ENCODE measurements at regions of chr11 and their contacts with region 1.

Region 1: GRCh38 chr11:87421422-87421821 is 383.7 kb downstream of the TMEM135 start:
- DNase-seq: peak in 2 of 6 donors; percentile 34 to 49
- ATAC-seq: peak; percentile 70 to 91 (median 89)
- H3K4me3 ChIP-seq: no peak overlapping the region
- H3K27ac ChIP-seq: no peak overlapping the region
- H3K4me1 ChIP-seq: no peaks in the 10 kb centered on the region
- H3K27me3 ChIP-seq: no peaks in the 10 kb centered on the region
- CTCF ChIP-seq: peak; percentile 67 to 84 (median 74)

Region 2: DNA sequence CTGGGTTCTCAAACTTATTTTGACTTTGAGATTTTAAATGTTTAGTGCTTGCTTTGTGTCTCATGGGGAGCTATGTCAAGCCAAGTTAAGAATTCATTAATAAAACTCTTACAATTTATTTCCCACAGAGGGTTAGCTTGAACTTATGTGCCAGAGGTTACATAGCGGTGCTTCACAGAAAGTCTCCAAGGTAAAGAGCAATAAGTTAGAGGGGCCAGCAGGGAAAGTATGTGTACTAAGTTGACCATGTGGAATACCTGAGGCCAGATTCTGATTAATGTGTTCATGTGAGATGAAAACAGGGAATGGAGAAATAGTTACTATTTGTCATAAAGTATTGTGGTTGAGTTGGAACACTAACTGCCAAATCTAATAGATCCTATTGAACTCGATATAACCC is 234.3 kb before region 1 on chr11:
- intact Hi-C with region 1: no loop called
- DNase-seq: no peak
- ATAC-seq: no peak
- H3K4me3 ChIP-seq: no peak overlapping the region
- H3K27ac ChIP-seq: no peak overlapping the region
- H3K4me1 ChIP-seq: no peaks in the 10 kb centered on the region
- H3K27me3 ChIP-seq: no peaks in the 10 kb centered on the region
- CTCF ChIP-seq: no peak

Region 3: DNA sequence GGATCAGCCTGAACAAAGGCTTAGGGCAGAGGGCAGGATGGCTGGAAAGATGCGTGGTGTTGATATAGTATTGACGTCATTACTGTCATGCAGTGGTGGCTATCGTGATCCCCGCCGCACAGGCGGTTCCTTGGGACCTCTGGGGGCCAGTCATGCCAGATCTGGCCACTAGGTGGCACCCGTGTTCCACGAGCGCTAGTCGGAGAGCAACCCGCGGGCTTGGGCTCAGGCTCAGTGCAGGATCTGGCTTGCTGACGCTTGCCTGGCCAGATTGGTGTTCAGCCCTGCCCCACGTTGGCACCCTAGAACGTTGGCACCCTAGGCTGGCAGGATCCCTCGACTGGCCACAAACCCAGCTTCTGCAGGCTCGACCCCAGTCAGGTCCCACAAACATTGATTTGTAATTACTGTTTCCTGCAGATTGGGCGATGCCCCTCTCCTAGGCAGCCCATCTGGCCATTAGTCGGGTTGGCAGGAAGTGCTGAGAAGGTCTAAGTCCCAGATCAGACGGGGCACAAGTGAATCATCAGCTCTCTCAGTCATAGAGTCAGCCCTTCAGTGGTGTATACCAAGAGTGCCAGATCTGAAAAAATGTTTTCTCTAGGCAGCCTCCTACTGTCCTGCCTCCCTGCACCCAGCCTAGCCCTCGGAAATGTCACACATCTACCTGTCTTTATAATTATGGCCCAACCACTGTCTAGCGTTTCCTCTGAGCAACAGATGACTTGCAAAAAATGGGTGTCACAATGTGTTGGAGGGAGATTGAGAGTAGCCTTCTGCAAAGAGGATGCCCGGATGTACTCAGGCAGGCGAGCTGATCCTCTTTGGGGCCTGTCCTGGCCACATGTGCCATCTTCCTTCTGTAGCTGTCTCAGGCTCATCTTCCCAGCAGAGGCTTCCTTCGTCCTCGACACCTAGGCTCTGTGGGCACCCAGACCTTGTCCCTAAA is 68.4 kb before region 1 on chr11:
- intact Hi-C with region 1: loop called in 2 of 3 experiments (anchors 5 to 10 kb)
- DNase-seq: peak; percentile 57 to 98 (median 84)
- ATAC-seq: peak; percentile 92 to 100 (median 98)
- H3K4me3 ChIP-seq: no peak overlapping the region
- H3K27ac ChIP-seq: no peak overlapping the region
- H3K4me1 ChIP-seq: no peaks in the 10 kb centered on the region
- H3K27me3 ChIP-seq: no peaks in the 10 kb centered on the region
- CTCF ChIP-seq: peak; percentile 98 to 100 (median 99)

Region 4: DNA sequence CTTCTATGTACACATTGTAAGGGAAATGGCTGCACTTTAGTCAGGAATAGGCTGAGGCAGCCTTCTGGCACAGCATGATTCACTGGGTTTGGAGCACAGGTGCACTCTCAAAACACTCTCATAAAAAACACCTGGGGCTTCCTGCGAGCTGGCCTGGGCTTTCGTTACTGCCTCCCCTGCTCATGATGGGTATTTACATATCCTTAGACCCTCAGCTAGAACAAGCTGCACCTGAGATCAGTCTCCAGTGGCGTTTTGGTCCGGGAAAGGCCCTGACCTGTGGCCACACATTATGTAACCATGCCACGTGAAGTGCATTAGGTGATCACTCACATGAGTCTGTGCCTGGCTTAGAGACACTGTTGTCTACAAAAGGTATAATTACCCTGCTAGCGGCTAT is 62.0 kb before region 1 on chr11:
- intact Hi-C with region 1: loop called in 2 of 3 experiments (anchors 5 to 10 kb)
- DNase-seq: no peak
- ATAC-seq: peak in 1 of 4 donors; percentile 46
- H3K4me3 ChIP-seq: no peak overlapping the region
- H3K27ac ChIP-seq: no peak overlapping the region
- H3K4me1 ChIP-seq: no peaks in the 10 kb centered on the region
- H3K27me3 ChIP-seq: no peaks in the 10 kb centered on the region
- CTCF ChIP-seq: no peak

Region 5: DNA sequence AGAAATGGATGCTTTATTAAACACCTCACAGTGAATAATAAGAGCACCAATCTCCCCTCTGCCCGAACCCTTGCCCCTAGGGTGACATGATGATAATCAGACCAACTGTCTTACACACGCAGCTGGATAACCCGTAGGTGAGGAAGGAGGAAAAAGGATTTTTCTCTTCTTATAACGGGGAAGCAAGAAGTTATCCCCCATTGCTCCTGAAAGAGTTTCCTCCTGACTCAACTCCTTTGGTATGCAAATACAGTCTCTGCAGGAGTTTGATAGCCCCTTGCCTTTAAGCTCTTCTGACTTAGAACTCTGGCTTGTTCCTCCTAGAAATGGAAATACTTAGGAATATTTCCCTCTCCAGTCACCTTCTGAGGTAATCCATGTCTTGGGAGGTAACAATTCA is 72.1 kb after region 1 on chr11:
- intact Hi-C with region 1: no loop called
- DNase-seq: no peak
- ATAC-seq: no peak
- H3K4me3 ChIP-seq: no peak overlapping the region
- H3K27ac ChIP-seq: no peak overlapping the region
- H3K4me1 ChIP-seq: no peaks in the 10 kb centered on the region
- H3K27me3 ChIP-seq: no peaks in the 10 kb centered on the region
- CTCF ChIP-seq: no peak

Region 6: GRCh38 chr11:87934182-87934581 is 512.8 kb after region 1 on chr11:
- intact Hi-C with region 1: no loop called
- DNase-seq: no peak
- ATAC-seq: no peak
- H3K4me3 ChIP-seq: no peak overlapping the region
- H3K27ac ChIP-seq: no peak overlapping the region
- H3K4me1 ChIP-seq: no peaks in the 10 kb centered on the region
- H3K27me3 ChIP-seq: no peaks in the 10 kb centered on the region
- CTCF ChIP-seq: no peak